ENCODE measurements at regions of chr5 and their contacts with region 1.

Region 1: GRCh38 chr5:112228667-112229066 is 190.4 kb downstream of the EPB41L4A start:
- DNase-seq: peak; percentile 87
- H3K4me3 Mint-ChIP-seq: no peak overlapping the region
- H3K27ac Mint-ChIP-seq: peak overlapping the region; percentile 80
- H3K4me1 Mint-ChIP-seq: peaks cover 25% of the 10 kb centered on the region
- H3K27me3 Mint-ChIP-seq: no peaks in the 10 kb centered on the region
- CTCF ChIP-seq: no peak

Region 2: DNA sequence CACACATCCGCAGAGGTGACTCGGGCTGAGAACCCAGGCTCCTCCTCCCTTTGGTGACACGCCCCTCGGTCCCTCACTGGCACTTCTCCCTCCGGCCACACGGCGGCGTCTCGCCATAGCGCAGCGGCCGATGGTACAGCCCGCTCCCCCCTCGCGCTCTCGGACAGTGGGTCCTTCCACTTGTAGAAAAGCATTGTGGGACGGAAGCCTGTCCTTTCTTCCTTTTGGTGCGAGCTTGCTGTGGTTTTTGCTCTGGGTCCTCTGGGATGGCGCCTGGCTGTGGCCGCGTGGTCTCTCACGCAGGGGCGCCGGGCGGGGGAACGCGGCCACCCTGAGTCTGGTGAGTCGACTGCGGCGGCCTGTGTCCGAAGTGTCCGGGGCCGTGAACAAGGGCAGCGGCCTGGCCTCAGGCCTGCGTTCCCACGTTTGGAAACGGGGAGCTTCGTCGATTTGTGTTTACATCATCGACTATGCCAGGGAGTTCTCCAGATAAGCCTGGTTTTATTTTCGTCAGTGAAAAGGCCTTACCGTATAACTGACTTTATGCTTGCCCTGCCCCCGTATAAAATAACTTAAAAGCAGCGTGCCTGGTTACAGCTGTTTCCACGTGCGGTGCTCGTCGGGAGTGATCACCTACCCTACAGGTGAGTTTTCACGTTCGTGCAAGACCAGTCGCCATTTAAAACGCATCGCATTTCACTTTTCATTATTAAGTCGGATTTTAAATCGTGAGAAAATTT is 67.8 kb before region 1 on chr5:
- CTCF ChIA-PET with region 1: no interaction called
- POLR2A ChIA-PET with region 1: interaction called, 10 read pairs
- intact Hi-C with region 1: no loop called
- DNase-seq: peak; percentile 90
- H3K4me3 Mint-ChIP-seq: peak overlapping the region; percentile 95
- H3K27ac Mint-ChIP-seq: peak overlapping the region; percentile 92
- H3K4me1 Mint-ChIP-seq: peaks cover 24% of the 10 kb centered on the region
- H3K27me3 Mint-ChIP-seq: no peaks in the 10 kb centered on the region
- CTCF ChIP-seq: peak; percentile 97

Region 3: GRCh38 chr5:112186401-112186990 is 42.2 kb before region 1 on chr5:
- CTCF ChIA-PET with region 1: interaction called, 5 read pairs
- POLR2A ChIA-PET with region 1: interaction called, 10 read pairs
- intact Hi-C with region 1: no loop called
- DNase-seq: peak; percentile 56
- H3K4me3 Mint-ChIP-seq: no peak overlapping the region
- H3K27ac Mint-ChIP-seq: no peak overlapping the region
- H3K4me1 Mint-ChIP-seq: peaks cover 10% of the 10 kb centered on the region
- H3K27me3 Mint-ChIP-seq: no peaks in the 10 kb centered on the region
- CTCF ChIP-seq: peak; percentile 48

Region 4: GRCh38 chr5:112210430-112211005 is 18.1 kb before region 1 on chr5:
- CTCF ChIA-PET with region 1: interaction called, 22 read pairs
- POLR2A ChIA-PET with region 1: interaction called, 31 read pairs
- intact Hi-C with region 1: no loop called
- DNase-seq: peak; percentile 63
- H3K4me3 Mint-ChIP-seq: no peak overlapping the region
- H3K27ac Mint-ChIP-seq: no peak overlapping the region
- H3K4me1 Mint-ChIP-seq: peaks cover 6% of the 10 kb centered on the region
- H3K27me3 Mint-ChIP-seq: no peaks in the 10 kb centered on the region
- CTCF ChIP-seq: peak; percentile 69

Region 5: GRCh38 chr5:112217843-112218579 is 10.7 kb before region 1 on chr5:
- CTCF ChIA-PET with region 1: interaction called, 22 read pairs
- POLR2A ChIA-PET with region 1: interaction called, 31 read pairs
- intact Hi-C with region 1: no loop called
- DNase-seq: peak; percentile 34
- H3K4me3 Mint-ChIP-seq: no peak overlapping the region
- H3K27ac Mint-ChIP-seq: no peak overlapping the region
- H3K4me1 Mint-ChIP-seq: peaks cover 9% of the 10 kb centered on the region
- H3K27me3 Mint-ChIP-seq: no peaks in the 10 kb centered on the region
- CTCF ChIP-seq: no peak

Region 6: GRCh38 chr5:112253478-112254250 is 25.0 kb after region 1 on chr5:
- CTCF ChIA-PET with region 1: no interaction called
- POLR2A ChIA-PET with region 1: interaction called, 24 read pairs
- intact Hi-C with region 1: no loop called
- DNase-seq: peak; percentile 89
- H3K4me3 Mint-ChIP-seq: no peak overlapping the region
- H3K27ac Mint-ChIP-seq: no peak overlapping the region
- H3K4me1 Mint-ChIP-seq: peaks cover 36% of the 10 kb centered on the region
- H3K27me3 Mint-ChIP-seq: no peaks in the 10 kb centered on the region
- CTCF ChIP-seq: no peak

Measured in MCF 10A (cell line).